ENCODE measurements at regions of chr3 and their contacts with region 1.

Region 1: DNA sequence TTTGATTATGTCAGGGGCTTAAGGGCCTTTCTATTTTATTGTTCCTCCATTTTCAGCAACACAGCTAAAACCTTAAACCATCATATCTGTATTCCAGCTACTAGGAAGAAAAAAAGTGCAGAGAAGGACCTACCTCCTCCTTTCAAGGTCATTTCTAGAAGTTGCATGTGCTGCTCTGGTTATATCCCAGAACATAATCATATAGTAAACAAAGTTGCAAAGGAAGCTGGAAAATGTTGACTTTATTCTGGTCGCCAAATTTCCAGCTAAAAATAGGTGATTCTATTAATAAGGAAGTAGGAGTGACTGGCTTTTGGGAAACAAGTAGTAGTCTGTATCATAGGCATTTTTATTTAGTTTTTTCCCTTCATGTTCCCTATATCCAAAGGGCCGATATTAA is 21.3 kb upstream of the B3GALNT1 start:
- DNase-seq: no peak
- ATAC-seq: no peak
- H3K4me3 ChIP-seq: no peak overlapping the region
- H3K27ac ChIP-seq: no peak overlapping the region
- H3K4me1 ChIP-seq: no peaks in the 10 kb centered on the region
- H3K27me3 ChIP-seq: no peaks in the 10 kb centered on the region

Region 2: DNA sequence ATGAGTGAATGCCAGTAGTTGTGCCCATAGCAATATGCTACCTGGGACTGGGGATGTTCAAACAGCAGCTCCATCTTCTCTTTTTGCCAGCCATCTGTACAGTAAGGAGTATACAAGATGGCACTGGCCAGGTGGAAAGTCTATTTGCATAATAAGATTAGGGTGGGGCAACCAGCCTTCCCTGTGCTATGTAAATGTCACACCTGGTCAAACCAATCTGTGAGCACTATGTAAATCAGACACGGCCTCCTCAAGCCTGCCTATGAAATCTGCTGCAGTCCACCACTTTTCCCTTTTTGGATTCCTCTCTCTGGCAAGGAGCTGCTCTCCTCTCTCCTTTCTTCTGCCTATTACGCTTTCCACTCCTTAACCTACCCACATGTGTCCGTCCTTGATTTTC is 848.3 kb before region 1 on chr3:
- intact Hi-C with region 1: no loop called
- DNase-seq: no peak
- ATAC-seq: no peak
- H3K4me3 ChIP-seq: no peak overlapping the region
- H3K27ac ChIP-seq: no peak overlapping the region
- H3K4me1 ChIP-seq: no peaks in the 10 kb centered on the region
- H3K27me3 ChIP-seq: no peaks in the 10 kb centered on the region

Region 3: GRCh38 chr3:160911411-160911810 is 215.1 kb before region 1 on chr3:
- intact Hi-C with region 1: no loop called
- DNase-seq: no peak
- ATAC-seq: no peak
- H3K4me3 ChIP-seq: no peak overlapping the region
- H3K27ac ChIP-seq: no peak overlapping the region
- H3K4me1 ChIP-seq: no peaks in the 10 kb centered on the region
- H3K27me3 ChIP-seq: no peaks in the 10 kb centered on the region

Region 4: DNA sequence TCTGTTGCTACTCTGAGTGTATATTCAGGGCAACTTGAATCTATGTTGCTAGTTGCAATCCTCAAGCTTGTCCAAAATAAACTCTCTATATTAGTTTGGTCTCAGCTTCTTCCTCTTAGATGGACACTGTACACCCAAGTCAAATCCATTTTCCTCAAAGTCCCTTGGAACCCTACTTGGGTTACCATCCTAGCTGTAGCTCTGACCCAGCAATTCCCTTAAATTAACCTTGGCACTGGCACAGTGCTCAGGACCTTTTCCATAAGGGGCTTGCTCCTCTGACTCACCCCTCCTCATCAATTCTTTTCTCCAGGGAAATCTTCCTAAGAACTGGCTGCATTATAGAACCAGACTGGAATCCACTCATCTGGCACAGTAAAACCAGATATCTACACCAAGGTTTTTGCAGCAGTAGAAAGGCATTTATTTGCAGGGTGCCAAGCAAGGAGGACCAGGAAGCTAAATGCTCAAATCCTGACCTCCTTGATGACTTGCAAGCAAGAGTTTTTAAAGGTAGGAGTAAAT is 23.6 kb after region 1 on chr3:
- intact Hi-C with region 1: loop called in 1 of 2 experiments (anchors 2 kb)
- DNase-seq: no peak
- ATAC-seq: no peak
- H3K4me3 ChIP-seq: no peak overlapping the region
- H3K27ac ChIP-seq: no peak overlapping the region
- H3K4me1 ChIP-seq: peaks cover 0 to 4% of the 10 kb centered on the region in 2 donors
- H3K27me3 ChIP-seq: no peaks in the 10 kb centered on the region

Region 5: GRCh38 chr3:161197855-161198850 is 71.7 kb after region 1 on chr3:
- intact Hi-C with region 1: no loop called
- DNase-seq: no peak
- ATAC-seq: no peak
- H3K4me3 ChIP-seq: no peak overlapping the region
- H3K27ac ChIP-seq: no peak overlapping the region
- H3K4me1 ChIP-seq: no peaks in the 10 kb centered on the region
- H3K27me3 ChIP-seq: no peaks in the 10 kb centered on the region

Measured in aorta (tissue), 5 donors.